B cell (primary cell): ENCODE measurements at regions of chr6 and their contacts with region 1.

Region 1: DNA sequence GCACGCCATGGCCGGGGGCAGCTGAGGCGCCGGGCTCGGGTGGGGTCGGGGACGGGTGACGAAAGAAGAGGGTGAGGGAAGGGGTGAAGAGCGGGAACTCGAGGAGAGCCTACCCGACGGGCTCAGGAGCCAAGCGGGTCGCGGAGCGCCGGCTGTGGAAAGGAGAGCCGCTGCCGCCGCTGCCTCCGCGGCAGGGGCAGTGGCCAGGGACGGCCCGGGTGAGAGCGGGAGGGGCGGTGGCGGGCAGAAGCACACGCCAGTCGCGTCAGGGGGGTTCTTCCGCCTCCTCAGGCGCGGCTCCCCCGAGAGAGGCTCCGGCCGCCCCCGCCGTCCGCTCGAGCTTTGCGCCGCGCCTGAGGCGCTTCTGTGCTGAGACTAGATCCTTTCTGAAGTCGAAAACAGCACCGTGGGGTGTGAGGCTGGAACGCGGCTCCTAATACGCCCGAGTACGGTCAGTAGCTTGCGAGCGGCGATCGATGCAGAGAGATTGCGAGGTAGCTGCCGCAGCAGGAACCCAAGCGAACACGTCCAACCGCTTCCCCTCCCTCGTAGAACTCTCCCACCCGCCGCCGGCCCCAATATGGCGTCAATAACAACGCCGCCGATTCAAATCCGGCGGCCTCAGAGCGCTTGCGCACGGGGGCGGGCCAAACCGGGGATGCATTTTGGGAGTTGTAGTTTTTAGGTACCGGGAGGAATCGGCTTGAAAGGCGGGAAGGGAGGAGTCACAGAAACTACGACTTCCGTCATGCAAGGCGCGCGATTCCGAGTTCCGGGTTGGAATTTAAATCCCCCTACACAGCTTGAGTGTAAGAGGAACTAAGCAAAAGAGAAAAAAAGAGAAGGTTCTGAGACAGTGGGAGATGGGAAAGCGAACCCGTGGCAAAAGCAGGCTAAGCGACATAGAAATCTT is at the start of gene AKIRIN2:
- DNase-seq: peak; percentile 99
- ATAC-seq: peak; percentile 77
- H3K4me3 ChIP-seq: peak within 1 kb of the TSS; percentile 86 to 100 (median 92)
- H3K4me3 Mint-ChIP-seq: peak within 1 kb of the TSS; percentile 97
- H3K27ac ChIP-seq: peak within 1 kb of the TSS; percentile 96 to 98
- H3K27ac Mint-ChIP-seq: peak within 1 kb of the TSS; percentile 99
- H3K4me1 ChIP-seq: peaks cover 16 to 32% of the 10 kb centered on the region in 2 donors
- H3K4me1 Mint-ChIP-seq: peaks cover 53% of the 10 kb centered on the region
- H3K27me3 ChIP-seq: no peaks in the 10 kb centered on the region
- H3K27me3 Mint-ChIP-seq: no peaks in the 10 kb centered on the region
- CTCF ChIP-seq: no peak
- total RNA-seq, gene AKIRIN2: 105 and 108 TPM in 2 replicates

Region 2: GRCh38 chr6:87322304-87323212 is 379.4 kb before region 1 on chr6 and contains the start of gene SMIM8:
- CTCF ChIA-PET with region 1: no interaction called
- POLR2A ChIA-PET with region 1: no interaction called
- intact Hi-C with region 1: loop called (anchors 5 kb)
- DNase-seq: peak; percentile 87
- ATAC-seq: peak; percentile 100
- H3K4me3 ChIP-seq: peak within 1 kb of the TSS; percentile 78 to 87 (median 81)
- H3K4me3 Mint-ChIP-seq: peak within 1 kb of the TSS; percentile 95
- H3K27ac ChIP-seq: peak within 1 kb of the TSS; percentile 42 to 74
- H3K27ac Mint-ChIP-seq: peak within 1 kb of the TSS; percentile 88
- H3K4me1 ChIP-seq: peaks cover 4 to 13% of the 10 kb centered on the region in 2 donors
- H3K4me1 Mint-ChIP-seq: peaks cover 25% of the 10 kb centered on the region
- H3K27me3 ChIP-seq: no peaks in the 10 kb centered on the region
- H3K27me3 Mint-ChIP-seq: no peaks in the 10 kb centered on the region
- CTCF ChIP-seq: peak; percentile 99
- total RNA-seq, gene SMIM8: 18.7 and 19.1 TPM in 2 replicates

Region 3: DNA sequence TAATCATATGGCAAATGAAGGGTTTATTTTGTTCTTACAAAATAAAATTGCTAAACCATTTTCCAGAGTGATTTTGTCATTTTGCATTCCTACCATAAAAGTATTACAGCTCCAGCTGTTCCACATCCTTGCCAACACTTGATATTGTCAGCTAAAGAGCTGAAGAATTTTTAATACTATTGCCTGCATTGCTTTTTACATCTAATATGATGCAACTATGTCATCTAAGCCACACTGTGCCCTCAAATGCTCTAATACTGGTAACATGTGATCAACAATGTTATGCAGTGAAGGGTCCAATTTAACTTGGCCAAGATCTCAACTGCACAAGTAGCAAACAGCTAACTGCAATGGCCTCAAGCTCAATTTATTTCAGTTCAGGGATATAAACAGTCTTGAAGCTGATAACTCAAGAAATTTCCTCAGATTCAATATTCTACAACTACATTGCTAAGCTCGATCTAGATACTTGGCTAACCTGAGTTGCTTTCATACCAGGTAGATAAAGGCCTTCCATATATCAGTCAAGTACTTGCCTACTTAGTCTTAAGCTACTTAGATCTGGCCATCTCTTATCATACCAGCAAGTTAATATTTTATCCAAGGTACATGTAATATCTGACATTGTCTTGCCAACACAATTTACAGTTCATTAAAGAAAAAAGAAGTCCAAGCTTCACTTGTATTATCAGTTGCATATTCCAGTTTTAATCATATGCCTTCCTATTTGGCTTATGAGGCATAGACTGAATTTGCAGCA is 16.9 kb before region 1 on chr6:
- CTCF ChIA-PET with region 1: interaction called, 6 read pairs
- POLR2A ChIA-PET with region 1: interaction called, 9 read pairs
- intact Hi-C with region 1: loop called (anchors 2 kb)
- DNase-seq: no peak
- ATAC-seq: no peak
- H3K4me3 ChIP-seq: no peak overlapping the region
- H3K4me3 Mint-ChIP-seq: no peak overlapping the region
- H3K27ac ChIP-seq: peak overlapping the region in 1 of 2 donors; percentile 7
- H3K27ac Mint-ChIP-seq: no peak overlapping the region
- H3K4me1 ChIP-seq: peaks cover 21 to 60% of the 10 kb centered on the region in 2 donors
- H3K4me1 Mint-ChIP-seq: peaks cover 79% of the 10 kb centered on the region
- H3K27me3 ChIP-seq: no peaks in the 10 kb centered on the region
- H3K27me3 Mint-ChIP-seq: no peaks in the 10 kb centered on the region
- CTCF ChIP-seq: no peak

Region 4: GRCh38 chr6:87756858-87757257 is 54.9 kb after region 1 on chr6:
- CTCF ChIA-PET with region 1: interaction called, 7 read pairs
- POLR2A ChIA-PET with region 1: interaction called, 5 read pairs
- intact Hi-C with region 1: loop called (anchors 1 kb)
- DNase-seq: peak; percentile 86
- ATAC-seq: peak; percentile 91
- H3K4me3 ChIP-seq: no peak overlapping the region
- H3K4me3 Mint-ChIP-seq: peak overlapping the region; percentile 62
- H3K27ac ChIP-seq: peak overlapping the region; percentile 9 to 43
- H3K27ac Mint-ChIP-seq: peak overlapping the region; percentile 89
- H3K4me1 ChIP-seq: peaks cover 37 to 40% of the 10 kb centered on the region in 2 donors
- H3K4me1 Mint-ChIP-seq: peaks cover 36% of the 10 kb centered on the region
- H3K27me3 ChIP-seq: no peaks in the 10 kb centered on the region
- H3K27me3 Mint-ChIP-seq: no peaks in the 10 kb centered on the region
- CTCF ChIP-seq: no peak

Region 5: GRCh38 chr6:87922947-87923330 is 221.0 kb after region 1 on chr6:
- CTCF ChIA-PET with region 1: no interaction called
- POLR2A ChIA-PET with region 1: interaction called, 10 read pairs
- intact Hi-C with region 1: loop called (anchors 2 kb)
- DNase-seq: peak; percentile 86
- ATAC-seq: peak; percentile 77
- H3K4me3 ChIP-seq: no peak overlapping the region
- H3K4me3 Mint-ChIP-seq: peak overlapping the region; percentile 63
- H3K27ac ChIP-seq: peak overlapping the region; percentile 63 to 91
- H3K27ac Mint-ChIP-seq: peak overlapping the region; percentile 92
- H3K4me1 ChIP-seq: peaks cover 90% of the 10 kb centered on the region in 2 donors
- H3K4me1 Mint-ChIP-seq: peaks cover 91% of the 10 kb centered on the region
- H3K27me3 ChIP-seq: no peaks in the 10 kb centered on the region
- H3K27me3 Mint-ChIP-seq: no peaks in the 10 kb centered on the region
- CTCF ChIP-seq: no peak

Region 6: DNA sequence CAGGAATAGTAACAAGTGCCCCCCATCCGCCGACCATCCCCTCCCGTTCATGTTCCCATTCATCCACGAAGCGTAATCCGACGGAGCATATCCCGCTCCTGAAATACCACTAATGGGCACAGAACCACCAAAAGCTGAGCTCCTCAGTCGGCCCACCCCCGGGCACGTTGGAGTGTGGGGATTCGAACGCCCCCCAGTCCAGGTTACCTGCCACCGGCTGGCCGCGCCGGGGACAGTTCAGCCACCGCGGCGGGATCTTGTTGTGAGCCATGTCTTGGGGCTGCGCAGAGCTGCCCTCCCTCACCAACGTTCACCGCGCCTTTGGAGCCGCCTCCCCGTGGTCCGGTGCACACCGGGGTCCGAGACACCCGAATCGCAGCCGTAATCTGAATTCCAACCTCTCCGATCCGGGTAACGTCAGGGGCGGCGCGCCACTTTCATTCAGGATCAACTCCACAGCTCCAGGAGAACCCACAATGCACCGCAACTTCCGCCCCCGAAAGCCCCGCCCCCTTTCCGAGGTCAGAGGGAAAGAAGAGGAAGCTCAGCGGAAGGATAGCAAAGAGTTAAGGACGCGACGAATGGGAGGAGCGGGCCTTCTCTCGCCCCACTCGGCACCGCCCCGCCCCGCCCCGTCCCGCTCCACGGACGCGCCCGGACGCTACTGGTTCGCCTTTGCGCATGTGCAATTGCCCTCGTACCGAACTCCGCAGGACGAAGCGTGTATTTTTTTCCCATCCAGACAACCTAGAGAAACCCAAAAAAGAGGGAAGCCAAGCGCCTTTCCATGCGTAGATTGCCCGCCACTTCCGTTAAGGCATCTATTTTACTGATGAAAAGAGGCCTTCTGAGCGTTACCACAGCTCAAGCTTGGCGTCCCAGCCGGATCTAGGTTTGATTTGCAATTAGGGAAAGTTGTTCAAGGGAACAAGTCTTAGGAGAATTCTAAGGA is 1261.5 kb after region 1 on chr6 and contains the start of gene RNGTT:
- CTCF ChIA-PET with region 1: no interaction called
- POLR2A ChIA-PET with region 1: no interaction called
- intact Hi-C with region 1: loop called (anchors 1 kb)
- DNase-seq: peak; percentile 97
- ATAC-seq: peak; percentile 100
- H3K4me3 ChIP-seq: peak within 1 kb of the TSS; percentile 92 to 94 (median 94)
- H3K4me3 Mint-ChIP-seq: peak within 1 kb of the TSS; percentile 98
- H3K27ac ChIP-seq: peak within 1 kb of the TSS; percentile 64 to 87
- H3K27ac Mint-ChIP-seq: peak within 1 kb of the TSS; percentile 96
- H3K4me1 ChIP-seq: peaks cover 10 to 17% of the 10 kb centered on the region in 2 donors
- H3K4me1 Mint-ChIP-seq: peaks cover 34% of the 10 kb centered on the region
- H3K27me3 ChIP-seq: no peaks in the 10 kb centered on the region
- H3K27me3 Mint-ChIP-seq: no peaks in the 10 kb centered on the region
- CTCF ChIP-seq: no peak
- total RNA-seq, gene RNGTT: 29.1 and 34.0 TPM in 2 replicates

Region 7: DNA sequence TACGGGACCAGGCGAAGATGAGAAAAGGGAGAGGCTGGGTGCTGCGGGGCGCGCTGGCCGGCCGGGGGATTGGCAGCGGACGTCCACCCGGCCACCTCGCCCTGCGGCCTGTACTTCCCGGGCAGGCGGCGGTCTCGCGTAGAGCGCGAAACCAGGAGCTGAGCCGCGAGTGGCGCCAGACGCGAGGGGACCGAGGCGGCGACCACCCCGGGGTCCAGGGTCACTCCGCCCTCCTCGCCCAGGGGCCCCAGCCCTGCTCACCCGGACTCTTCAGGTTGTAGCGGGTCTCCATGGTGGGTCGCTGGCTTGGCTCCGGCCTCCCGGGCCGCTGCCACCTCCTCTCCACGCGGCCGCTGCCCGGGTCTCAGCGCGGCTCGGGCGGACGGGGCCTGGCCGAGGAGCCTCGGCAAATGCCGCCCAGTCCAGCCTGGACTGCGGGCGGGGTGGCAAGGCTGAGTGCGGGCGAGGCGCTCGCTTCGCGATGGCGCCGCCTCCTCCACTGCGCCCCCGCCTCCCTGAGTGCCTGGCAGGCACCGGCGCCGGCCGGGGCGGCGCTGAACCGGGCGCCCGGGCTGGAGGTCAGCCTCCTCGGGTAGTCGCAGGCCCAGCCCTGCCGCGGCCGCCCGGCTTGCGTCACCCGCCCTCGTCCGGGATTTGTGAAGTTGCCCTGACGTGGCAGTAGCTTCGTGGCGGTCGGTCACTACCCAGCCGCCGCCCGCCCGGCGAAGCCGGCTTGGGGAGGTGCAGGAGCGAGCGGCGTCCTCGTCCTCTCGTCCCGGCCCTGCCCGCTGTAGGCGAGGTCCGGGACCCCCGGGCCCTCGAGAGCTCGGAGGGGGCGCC is 1650.6 kb after region 1 on chr6 and contains the start of gene UBE2J1:
- CTCF ChIA-PET with region 1: no interaction called
- POLR2A ChIA-PET with region 1: no interaction called
- intact Hi-C with region 1: loop called (anchors 10 kb)
- DNase-seq: peak; percentile 87
- ATAC-seq: peak; percentile 81
- H3K4me3 ChIP-seq: peak within 1 kb of the TSS; percentile 72 to 99 (median 82)
- H3K4me3 Mint-ChIP-seq: peak within 1 kb of the TSS; percentile 93
- H3K27ac ChIP-seq: peak within 1 kb of the TSS; percentile 83 to 94
- H3K27ac Mint-ChIP-seq: peak within 1 kb of the TSS; percentile 95
- H3K4me1 ChIP-seq: peaks cover 73 to 74% of the 10 kb centered on the region in 2 donors
- H3K4me1 Mint-ChIP-seq: peaks cover 78% of the 10 kb centered on the region
- H3K27me3 ChIP-seq: no peaks in the 10 kb centered on the region
- H3K27me3 Mint-ChIP-seq: no peaks in the 10 kb centered on the region
- CTCF ChIP-seq: no peak
- total RNA-seq, gene UBE2J1: 28.0 and 31.1 TPM in 2 replicates